ENCODE measurements at regions of chr18 and their contacts with region 1.

Region 1: DNA sequence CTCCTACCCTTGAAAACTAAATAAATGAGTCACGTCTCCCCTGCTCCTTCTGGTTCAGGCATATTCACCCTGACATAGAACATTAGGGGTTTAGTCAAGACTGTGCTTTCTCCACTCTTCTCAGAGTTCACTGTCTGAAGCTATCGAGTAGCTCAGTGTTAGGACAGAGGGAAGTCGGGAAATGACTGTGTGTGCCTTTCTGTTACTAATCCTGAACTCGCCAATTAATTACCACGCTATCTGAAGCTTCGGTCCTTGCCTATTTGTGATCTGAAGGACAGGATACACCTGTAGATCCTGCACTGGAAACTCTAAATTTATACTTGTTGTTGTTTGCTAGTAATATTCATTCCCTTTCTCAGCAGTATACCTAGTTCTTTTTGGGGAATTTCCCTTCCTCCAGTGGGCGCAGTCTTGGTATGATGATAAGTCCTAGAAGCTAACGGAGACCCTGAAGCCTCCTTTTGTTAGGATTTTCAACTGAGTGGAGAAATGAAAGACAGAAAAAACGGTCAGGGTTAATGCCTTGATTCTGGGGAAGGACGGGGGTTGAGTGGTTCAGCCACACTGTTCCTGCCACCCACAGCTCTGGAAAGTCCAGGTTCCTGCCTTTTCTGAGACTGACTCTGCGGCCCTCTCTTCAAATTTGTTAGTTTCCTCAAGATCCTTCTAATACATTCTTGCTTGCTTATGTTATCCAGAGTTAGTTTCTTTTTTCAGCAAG is 218.0 kb downstream of the DLGAP1 start:
- DNase-seq: no peak
- H3K4me3 ChIP-seq: no peak overlapping the region
- H3K27ac ChIP-seq: no peak overlapping the region
- H3K4me1 ChIP-seq: no peaks in the 10 kb centered on the region
- CTCF ChIP-seq: no peak

Region 2: DNA sequence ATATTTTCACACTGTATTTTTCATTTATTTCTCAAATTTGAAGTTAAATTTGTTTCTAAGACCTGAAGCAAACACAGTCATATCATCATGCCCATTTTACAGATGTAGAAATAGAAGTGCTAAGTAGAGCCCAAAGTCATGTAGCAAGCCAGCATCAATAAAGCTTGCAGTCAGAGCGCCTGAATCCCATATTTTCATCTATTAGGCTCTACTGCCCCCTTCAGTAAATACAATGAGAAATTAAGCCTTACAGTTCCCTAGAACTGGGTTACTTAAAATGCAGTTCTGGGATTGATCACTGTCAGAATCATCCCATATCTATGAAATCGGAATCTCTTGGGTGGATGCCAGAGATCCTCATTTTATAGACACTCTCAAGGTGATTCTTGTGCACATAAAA is 367.3 kb before region 1 on chr18:
- CTCF ChIA-PET with region 1: no interaction called
- POLR2A ChIA-PET with region 1: no interaction called
- intact Hi-C with region 1: no loop called
- DNase-seq: peak; percentile 56
- H3K4me3 ChIP-seq: no peak overlapping the region
- H3K27ac ChIP-seq: no peak overlapping the region
- H3K4me1 ChIP-seq: peaks cover 7% of the 10 kb centered on the region
- CTCF ChIP-seq: peak; percentile 76

Region 3: DNA sequence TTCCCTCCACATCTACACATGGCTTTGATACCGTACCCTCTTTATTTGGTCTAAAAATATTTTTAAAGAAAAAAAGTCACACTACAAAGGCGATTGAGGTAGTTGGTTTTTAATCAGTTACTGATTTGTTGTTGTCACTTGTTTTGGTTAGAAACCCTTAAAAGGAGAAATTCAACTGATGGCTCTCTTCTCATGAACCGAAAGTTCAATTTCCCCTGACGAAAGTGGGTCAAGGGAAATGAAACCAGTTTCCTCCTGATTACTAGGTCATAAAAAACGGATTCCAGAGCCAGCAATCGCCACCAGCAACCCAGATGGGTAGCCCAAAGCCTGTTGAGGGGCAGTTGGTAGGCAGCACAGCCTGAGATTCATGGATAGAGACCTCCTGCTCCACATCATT is 154.8 kb after region 1 on chr18:
- CTCF ChIA-PET with region 1: no interaction called
- POLR2A ChIA-PET with region 1: interaction called, 10 read pairs
- intact Hi-C with region 1: no loop called
- DNase-seq: peak; percentile 8
- H3K4me3 ChIP-seq: no peak overlapping the region
- H3K27ac ChIP-seq: no peak overlapping the region
- H3K4me1 ChIP-seq: peaks cover 15% of the 10 kb centered on the region
- CTCF ChIP-seq: no peak

Region 4: DNA sequence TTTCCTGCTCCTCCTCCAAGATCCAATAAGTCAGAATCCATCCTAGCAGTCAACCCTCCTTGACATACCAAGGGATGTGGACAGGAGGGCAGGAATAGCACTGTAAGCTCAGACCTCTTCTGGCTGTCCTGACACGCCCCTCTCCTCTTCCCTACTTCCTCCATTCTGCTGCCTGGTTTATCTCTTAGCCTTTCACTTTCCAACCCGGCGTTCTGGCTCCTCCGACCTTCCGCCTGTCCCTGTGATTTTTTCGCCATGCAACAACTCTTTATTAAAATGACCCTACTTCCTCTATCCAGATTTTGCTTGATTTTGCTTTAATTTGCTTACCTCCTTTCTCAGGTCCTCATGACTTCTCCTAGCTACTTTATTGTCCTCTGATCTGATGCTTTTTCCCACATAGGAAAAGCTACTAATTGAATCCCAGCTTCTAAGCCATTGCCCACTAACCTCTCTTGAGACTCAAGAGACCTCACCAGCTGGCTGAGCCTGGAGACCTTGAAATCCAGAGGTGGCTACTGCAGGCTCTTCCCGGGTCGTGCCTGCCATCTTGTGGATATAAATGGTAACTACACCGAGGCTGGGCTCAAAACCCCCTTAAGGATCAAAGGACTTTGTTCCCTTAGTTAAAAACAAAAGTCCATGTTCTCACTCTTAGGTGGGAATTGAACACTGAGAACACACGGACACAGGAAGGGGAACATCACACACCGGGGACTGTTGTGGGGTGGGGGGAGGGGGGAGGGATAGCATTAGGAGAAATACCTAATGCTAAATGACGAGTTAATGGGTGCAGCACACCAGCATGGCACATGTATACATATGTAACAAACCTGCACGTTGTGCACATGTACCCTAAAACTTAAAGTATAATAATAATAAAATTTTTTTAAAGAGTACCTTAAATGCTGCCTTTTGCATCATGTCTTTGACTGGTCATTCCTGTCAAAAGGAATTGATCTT is 820.6 kb after region 1 on chr18:
- CTCF ChIA-PET with region 1: no interaction called
- POLR2A ChIA-PET with region 1: no interaction called
- intact Hi-C with region 1: loop called (anchors 10 kb)
- DNase-seq: peak; percentile 74
- H3K4me3 ChIP-seq: no peak overlapping the region
- H3K27ac ChIP-seq: no peak overlapping the region
- H3K4me1 ChIP-seq: peaks cover 17% of the 10 kb centered on the region
- CTCF ChIP-seq: peak; percentile 89